CD8-positive, alpha-beta memory T cell (primary cell): ENCODE measurements at regions of chrX and their contacts with region 1.

Region 1: GRCh38 chrX:41711021-41711667 is 12.8 kb upstream of the GPR82 start:
- DNase-seq: no peak
- H3K4me3 ChIP-seq: no peak overlapping the region
- H3K4me3 Mint-ChIP-seq: no peak overlapping the region
- H3K27ac ChIP-seq: no peak overlapping the region
- H3K27ac Mint-ChIP-seq: no peak overlapping the region
- H3K4me1 ChIP-seq: peaks cover 2% of the 10 kb centered on the region
- H3K4me1 Mint-ChIP-seq: peaks cover 17 to 55% (median 29%) of the 10 kb centered on the region in 3 donors
- H3K27me3 ChIP-seq: no peaks in the 10 kb centered on the region
- H3K27me3 Mint-ChIP-seq: peaks cover 0 to 7% of the 10 kb centered on the region in 2 donors

Region 2: GRCh38 chrX:41758401-41758800 is 47.3 kb after region 1 on chrX:
- CTCF ChIA-PET with region 1: no interaction called
- POLR2A ChIA-PET with region 1: interaction called, 12 read pairs
- DNase-seq: no peak
- H3K4me3 ChIP-seq: no peak overlapping the region
- H3K4me3 Mint-ChIP-seq: no peak overlapping the region
- H3K27ac ChIP-seq: no peak overlapping the region
- H3K27ac Mint-ChIP-seq: peak overlapping the region in 1 of 8 donors; percentile 47
- H3K4me1 ChIP-seq: no peaks in the 10 kb centered on the region
- H3K4me1 Mint-ChIP-seq: peaks cover 8 to 39% (median 11%) of the 10 kb centered on the region in 3 donors
- H3K27me3 ChIP-seq: no peaks in the 10 kb centered on the region
- H3K27me3 Mint-ChIP-seq: peaks cover 0 to 4% of the 10 kb centered on the region in 2 donors